ENCODE measurements at regions of chr22 and their contacts with region 1.

Region 1: GRCh38 chr22:17303840-17304779 is 65.2 kb upstream of the CECR2 start:
- DNase-seq: peak; percentile 94
- H3K4me3 Mint-ChIP-seq: peak overlapping the region; percentile 75
- H3K27ac Mint-ChIP-seq: peak overlapping the region; percentile 90
- H3K4me1 Mint-ChIP-seq: peaks cover 41% of the 10 kb centered on the region
- H3K27me3 Mint-ChIP-seq: no peaks in the 10 kb centered on the region

Region 2: DNA sequence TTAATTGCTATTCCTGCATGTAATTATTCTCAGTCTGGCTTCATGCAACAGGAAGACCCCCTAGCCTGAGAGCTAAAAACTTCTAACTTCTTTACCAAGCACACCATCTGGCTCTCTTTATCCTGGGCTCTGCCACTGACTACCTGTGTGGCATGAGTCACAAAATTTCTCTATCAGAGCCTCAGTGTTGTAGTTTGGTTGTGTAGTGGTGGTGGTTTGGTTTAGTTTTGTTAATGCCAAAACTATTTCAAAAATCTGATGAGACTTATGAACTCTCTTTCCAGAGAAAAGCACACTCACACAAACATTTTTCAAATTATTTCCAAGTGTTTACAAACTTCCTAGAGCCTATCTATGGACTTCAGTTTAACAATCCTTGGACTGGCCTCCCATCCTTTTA is 226.9 kb before region 1 on chr22:
- intact Hi-C with region 1: loop called (anchors 5 kb)
- DNase-seq: no peak
- H3K4me3 Mint-ChIP-seq: no peak overlapping the region
- H3K27ac Mint-ChIP-seq: no peak overlapping the region
- H3K4me1 Mint-ChIP-seq: peaks cover 18% of the 10 kb centered on the region
- H3K27me3 Mint-ChIP-seq: peaks cover 29% of the 10 kb centered on the region

Region 3: GRCh38 chr22:17258015-17258787 is 45.9 kb before region 1 on chr22:
- intact Hi-C with region 1: loop called (anchors 1 kb)
- DNase-seq: peak; percentile 92
- H3K4me3 Mint-ChIP-seq: peak overlapping the region; percentile 66
- H3K27ac Mint-ChIP-seq: peak overlapping the region; percentile 49
- H3K4me1 Mint-ChIP-seq: peaks cover 30% of the 10 kb centered on the region
- H3K27me3 Mint-ChIP-seq: peaks cover 1% of the 10 kb centered on the region

Region 4: GRCh38 chr22:17359501-17359900 is 55.4 kb after region 1 on chr22:
- intact Hi-C with region 1: no loop called
- DNase-seq: no peak
- H3K4me3 Mint-ChIP-seq: no peak overlapping the region
- H3K27ac Mint-ChIP-seq: no peak overlapping the region
- H3K4me1 Mint-ChIP-seq: no peaks in the 10 kb centered on the region
- H3K27me3 Mint-ChIP-seq: peaks cover 6% of the 10 kb centered on the region

Region 5: GRCh38 chr22:17418890-17419324 is 114.8 kb after region 1 on chr22:
- intact Hi-C with region 1: no loop called
- DNase-seq: no peak
- H3K4me3 Mint-ChIP-seq: no peak overlapping the region
- H3K27ac Mint-ChIP-seq: no peak overlapping the region
- H3K4me1 Mint-ChIP-seq: no peaks in the 10 kb centered on the region
- H3K27me3 Mint-ChIP-seq: peaks cover 5% of the 10 kb centered on the region

Measured in activated CD4-positive, alpha-beta T cell treated with anti-CD3 and anti-CD28 coated beads, Interleukin-2, amount 10 ng/mL, durations not matched to agents 24 days and 14 days (primary cell).